ENCODE measurements at regions of chr3 and their contacts with region 1.

Region 1: DNA sequence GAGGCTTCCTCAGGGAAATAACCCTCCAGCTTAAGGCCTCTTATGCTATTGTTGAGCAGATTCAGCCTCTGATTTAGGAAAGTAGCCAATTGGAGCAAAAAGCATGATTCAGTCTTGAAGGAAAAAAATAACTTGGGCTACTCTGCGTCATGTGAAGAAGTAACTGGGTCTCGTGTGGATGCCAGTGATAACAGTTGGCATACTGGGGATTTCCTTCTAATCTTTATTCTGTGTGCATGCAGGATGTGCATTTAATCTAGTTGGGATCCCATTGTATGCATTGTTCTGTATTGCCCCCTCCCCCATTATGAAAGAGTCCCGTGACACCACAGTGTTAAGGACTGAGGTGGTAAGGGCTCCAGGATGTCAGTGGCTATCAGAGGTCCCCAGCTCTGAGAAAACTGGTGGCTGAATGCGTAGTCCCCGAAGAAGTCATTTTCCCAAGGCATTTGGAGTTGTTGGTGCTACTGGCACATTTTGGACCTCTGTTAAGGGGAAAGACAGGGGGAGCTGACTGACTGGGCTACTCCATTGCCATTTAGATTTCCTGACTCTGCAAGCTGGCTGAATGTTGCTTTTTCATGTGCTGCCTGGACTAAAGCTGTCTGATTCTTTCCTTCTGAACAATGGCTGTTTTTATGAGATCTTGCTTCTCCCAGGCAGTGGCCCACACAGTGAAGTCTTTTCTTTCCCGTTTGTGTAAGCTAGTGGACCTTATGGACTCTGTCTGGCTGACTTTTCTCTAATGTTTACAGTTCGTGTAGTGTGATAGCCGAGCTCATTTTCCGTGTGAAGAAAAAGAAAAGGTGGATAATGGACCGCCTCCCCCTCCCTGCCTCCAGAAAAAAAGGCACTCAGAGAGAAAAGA is 38.4 kb upstream of the TRAK1 start:
- DNase-seq: peak in 5 of 10 donors; percentile 24 to 71 (median 37)
- H3K4me3 ChIP-seq: peak overlapping the region in 29 of 59 donors; percentile 0 to 43 (median 20)
- H3K27ac ChIP-seq: peak overlapping the region in 56 of 59 donors; percentile 0 to 90 (median 70)
- H3K27me3 ChIP-seq: no peaks in the 10 kb centered on the region
- CTCF ChIP-seq: peak in 51 of 56 donors; percentile 6 to 72 (median 42)

Region 2: GRCh38 chr3:41424543-41425300 is 628.0 kb before region 1 on chr3:
- intact Hi-C with region 1: no loop called
- DNase-seq: no peak
- H3K4me3 ChIP-seq: no peak overlapping the region
- H3K27ac ChIP-seq: no peak overlapping the region
- H3K27me3 ChIP-seq: no peaks in the 10 kb centered on the region
- CTCF ChIP-seq: no peak

Region 3: DNA sequence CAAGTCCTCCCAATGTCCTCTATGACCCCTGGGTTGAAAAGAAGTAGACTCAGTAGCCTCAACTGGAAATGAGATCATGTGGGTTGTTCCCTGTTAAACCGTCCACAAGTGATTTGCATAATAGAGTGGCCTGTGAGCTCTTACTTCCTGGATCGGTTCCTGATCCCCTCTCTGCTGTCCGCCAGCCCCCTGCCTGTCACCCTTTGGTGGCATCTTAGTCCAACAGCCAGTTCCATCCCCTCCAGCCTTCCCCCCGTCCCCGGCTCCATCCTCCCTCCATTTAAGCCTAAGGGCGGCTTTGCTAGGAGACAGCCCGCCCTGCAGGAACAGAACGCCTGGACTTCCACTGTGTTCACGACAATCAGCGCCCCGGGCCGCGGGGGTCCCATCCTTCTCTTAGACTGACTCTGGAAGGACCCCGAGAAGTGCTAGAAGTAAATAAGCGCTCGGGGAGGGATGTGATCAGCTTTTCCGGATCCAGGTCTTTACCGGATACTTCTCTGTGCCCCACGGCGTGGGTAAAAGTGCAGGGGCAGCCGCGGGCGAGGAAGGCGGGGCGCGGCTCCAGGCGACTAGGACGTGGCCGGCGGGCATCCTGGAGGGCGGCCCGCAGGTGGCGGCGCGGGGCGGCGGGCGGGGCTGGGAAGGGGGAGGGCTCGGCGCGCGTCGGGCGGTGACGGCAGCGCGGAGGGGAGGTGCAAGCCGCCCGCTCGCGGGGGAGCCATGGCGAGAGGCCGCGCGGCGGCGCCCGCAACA is 39.6 kb before region 1 on chr3:
- intact Hi-C with region 1: loop called in 1 of 2 experiments (anchors 5 kb)
- DNase-seq: peak in 9 of 10 donors; percentile 44 to 77 (median 60)
- H3K4me3 ChIP-seq: peak overlapping the region; percentile 46 to 98 (median 75)
- H3K27ac ChIP-seq: peak overlapping the region in 57 of 59 donors; percentile 14 to 91 (median 83)
- H3K27me3 ChIP-seq: no peaks in the 10 kb centered on the region
- CTCF ChIP-seq: peak in 5 of 56 donors; percentile 6 to 40 (median 16)

Region 4: DNA sequence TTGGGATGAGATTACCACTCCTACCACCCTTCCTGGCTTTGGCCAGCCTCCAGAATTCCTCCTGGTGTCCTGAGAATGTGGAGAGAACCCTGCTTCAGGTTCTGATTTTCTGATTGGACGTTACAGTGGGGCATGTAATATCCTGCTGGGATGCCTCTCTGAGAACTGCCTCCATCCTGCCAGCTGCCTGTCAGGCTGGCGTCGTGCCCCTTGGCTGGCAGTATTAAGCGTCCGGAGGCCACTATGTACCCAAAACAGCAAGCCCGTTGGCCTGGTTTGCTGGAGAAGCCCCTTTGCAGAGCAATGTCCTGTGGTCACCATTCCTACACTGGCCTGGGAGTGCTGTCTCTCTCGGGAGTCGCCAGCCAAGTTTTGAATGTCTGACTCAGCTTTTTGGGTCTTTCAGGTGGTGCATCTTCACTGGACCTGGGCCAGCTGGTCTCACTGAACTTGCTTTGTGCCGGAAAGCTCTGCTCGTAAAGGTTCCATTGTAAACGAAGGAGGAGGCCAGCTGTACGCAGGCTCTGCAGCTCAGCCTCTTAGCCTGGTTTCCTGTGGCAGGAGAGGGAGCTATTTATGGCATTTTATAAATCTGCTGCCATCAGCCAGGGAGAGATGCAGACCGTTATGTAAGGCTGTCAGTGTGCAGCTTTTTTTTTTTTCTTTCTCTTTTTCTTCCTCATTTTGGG is 19.3 kb after region 1 on chr3:
- intact Hi-C with region 1: loop called in 1 of 2 experiments (anchors 1 kb)
- DNase-seq: peak; percentile 59 to 93 (median 76)
- H3K4me3 ChIP-seq: peak overlapping the region; percentile 13 to 67 (median 49)
- H3K27ac ChIP-seq: peak overlapping the region; percentile 58 to 99 (median 89)
- H3K27me3 ChIP-seq: no peaks in the 10 kb centered on the region
- CTCF ChIP-seq: peak in 9 of 56 donors; percentile 4 to 36 (median 13)